ENCODE measurements at regions of chr6 and their contacts with region 1.

Region 1: DNA sequence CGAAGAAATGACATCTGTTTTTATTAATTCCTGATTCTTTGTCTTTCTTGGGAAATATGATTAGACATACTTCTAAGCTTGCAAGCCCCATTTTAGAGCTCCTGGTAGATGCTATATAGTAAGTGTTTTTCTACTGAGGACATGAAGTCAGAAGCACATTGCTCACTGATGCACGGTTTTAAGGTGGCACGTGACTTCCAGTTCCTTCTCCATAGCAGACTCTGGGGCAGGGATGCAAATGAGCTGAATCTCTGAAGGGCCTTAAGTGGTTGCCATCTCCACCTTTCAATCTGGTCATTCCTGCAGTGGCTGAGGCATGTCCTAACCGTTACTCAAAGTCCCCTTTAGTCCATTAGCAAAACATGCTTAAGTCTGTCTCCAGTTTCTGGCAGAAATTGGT is 421.2 kb upstream of the HTR1E start:
- DNase-seq: no peak
- H3K4me3 Mint-ChIP-seq: no peak overlapping the region
- H3K27ac Mint-ChIP-seq: no peak overlapping the region
- H3K4me1 Mint-ChIP-seq: no peaks in the 10 kb centered on the region
- H3K27me3 Mint-ChIP-seq: no peaks in the 10 kb centered on the region
- CTCF ChIP-seq: no peak

Region 2: GRCh38 chr6:85747665-85748064 is 768.4 kb before region 1 on chr6:
- CTCF ChIA-PET with region 1: no interaction called
- intact Hi-C with region 1: no loop called
- DNase-seq: no peak
- H3K4me3 Mint-ChIP-seq: no peak overlapping the region
- H3K27ac Mint-ChIP-seq: no peak overlapping the region
- H3K4me1 Mint-ChIP-seq: peaks cover 3% of the 10 kb centered on the region
- H3K27me3 Mint-ChIP-seq: no peaks in the 10 kb centered on the region
- CTCF ChIP-seq: no peak

Region 3: DNA sequence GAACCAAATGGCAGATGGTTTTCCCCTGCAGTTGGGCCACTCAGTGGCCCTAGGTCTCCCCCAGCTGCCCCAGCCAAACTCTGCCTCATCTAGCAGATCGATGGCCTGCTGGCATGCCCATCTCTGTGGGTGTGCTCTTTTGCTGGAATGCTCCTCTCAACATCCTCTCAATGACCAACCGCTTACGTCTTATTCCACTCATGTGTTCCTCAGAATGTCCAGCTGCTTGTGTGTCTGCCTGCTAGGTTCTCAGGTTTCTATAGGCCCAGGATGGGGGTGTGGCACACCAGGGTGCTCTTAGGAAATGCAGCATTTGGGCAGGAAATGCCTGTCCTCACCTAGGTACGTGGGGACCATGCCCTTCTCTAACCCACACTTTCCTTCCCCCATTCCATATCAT is 363.5 kb before region 1 on chr6:
- CTCF ChIA-PET with region 1: no interaction called
- intact Hi-C with region 1: no loop called
- DNase-seq: no peak
- H3K4me3 Mint-ChIP-seq: no peak overlapping the region
- H3K27ac Mint-ChIP-seq: no peak overlapping the region
- H3K4me1 Mint-ChIP-seq: no peaks in the 10 kb centered on the region
- H3K27me3 Mint-ChIP-seq: no peaks in the 10 kb centered on the region
- CTCF ChIP-seq: no peak

Region 4: GRCh38 chr6:86407128-86407527 is 109.0 kb before region 1 on chr6:
- CTCF ChIA-PET with region 1: no interaction called
- intact Hi-C with region 1: no loop called
- DNase-seq: no peak
- H3K4me3 Mint-ChIP-seq: no peak overlapping the region
- H3K27ac Mint-ChIP-seq: no peak overlapping the region
- H3K4me1 Mint-ChIP-seq: no peaks in the 10 kb centered on the region
- H3K27me3 Mint-ChIP-seq: peaks cover 13% of the 10 kb centered on the region
- CTCF ChIP-seq: no peak

Region 5: GRCh38 chr6:86474061-86474830 is 41.8 kb before region 1 on chr6:
- CTCF ChIA-PET with region 1: interaction called, 10 read pairs
- intact Hi-C with region 1: no loop called
- DNase-seq: no peak
- H3K4me3 Mint-ChIP-seq: no peak overlapping the region
- H3K27ac Mint-ChIP-seq: no peak overlapping the region
- H3K4me1 Mint-ChIP-seq: peaks cover 8% of the 10 kb centered on the region
- H3K27me3 Mint-ChIP-seq: no peaks in the 10 kb centered on the region
- CTCF ChIP-seq: no peak

Region 6: GRCh38 chr6:86529635-86530034 is 13.5 kb after region 1 on chr6:
- CTCF ChIA-PET with region 1: no interaction called
- intact Hi-C with region 1: loop called (anchors 1 kb)
- DNase-seq: no peak
- H3K4me3 Mint-ChIP-seq: no peak overlapping the region
- H3K27ac Mint-ChIP-seq: no peak overlapping the region
- H3K4me1 Mint-ChIP-seq: no peaks in the 10 kb centered on the region
- H3K27me3 Mint-ChIP-seq: no peaks in the 10 kb centered on the region
- CTCF ChIP-seq: no peak

Measured in Calu3 (cell line).